HCT116 (cell line): ENCODE measurements at regions of chr9 and their contacts with region 1.

Region 1: GRCh38 chr9:347667-348292 is 133.1 kb downstream of the DOCK8 start:
- DNase-seq: peak; percentile 40
- ATAC-seq: peak; percentile 85
- H3K4me3 ChIP-seq: no peak overlapping the region
- H3K27ac ChIP-seq: no peak overlapping the region
- H3K4me1 ChIP-seq: no peaks in the 10 kb centered on the region
- H3K27me3 ChIP-seq: peaks cover 18% of the 10 kb centered on the region
- CTCF ChIP-seq: peak; percentile 75 to 92 (median 87)
- POLR2A ChIP-seq: no peak
- RAD21 ChIP-seq: peak; percentile 85

Region 2: GRCh38 chr9:763692-764524 is 416.1 kb after region 1 on chr9:
- CTCF ChIA-PET with region 1: interaction called, 8 read pairs
- POLR2A ChIA-PET with region 1: no interaction called
- RAD21 ChIA-PET with region 1: interaction called, 3 to 4 read pairs
- intact Hi-C with region 1: loop called (anchors 1 kb)
- DNase-seq: peak; percentile 90
- ATAC-seq: peak; percentile 100
- H3K4me3 ChIP-seq: no peak overlapping the region; a peak in 1 of 4 replicates
- H3K27ac ChIP-seq: no peak overlapping the region
- H3K4me1 ChIP-seq: peaks cover 3 to 6% of the 10 kb centered on the region in 2 experiments; a peak in 3 of 4 replicates
- H3K27me3 ChIP-seq: peaks cover 4% of the 10 kb centered on the region; the same call in 1 of the 2 replicates
- CTCF ChIP-seq: peak; percentile 81 to 96 (median 93)
- POLR2A ChIP-seq: no peak
- RAD21 ChIP-seq: peak; percentile 95

Region 3: DNA sequence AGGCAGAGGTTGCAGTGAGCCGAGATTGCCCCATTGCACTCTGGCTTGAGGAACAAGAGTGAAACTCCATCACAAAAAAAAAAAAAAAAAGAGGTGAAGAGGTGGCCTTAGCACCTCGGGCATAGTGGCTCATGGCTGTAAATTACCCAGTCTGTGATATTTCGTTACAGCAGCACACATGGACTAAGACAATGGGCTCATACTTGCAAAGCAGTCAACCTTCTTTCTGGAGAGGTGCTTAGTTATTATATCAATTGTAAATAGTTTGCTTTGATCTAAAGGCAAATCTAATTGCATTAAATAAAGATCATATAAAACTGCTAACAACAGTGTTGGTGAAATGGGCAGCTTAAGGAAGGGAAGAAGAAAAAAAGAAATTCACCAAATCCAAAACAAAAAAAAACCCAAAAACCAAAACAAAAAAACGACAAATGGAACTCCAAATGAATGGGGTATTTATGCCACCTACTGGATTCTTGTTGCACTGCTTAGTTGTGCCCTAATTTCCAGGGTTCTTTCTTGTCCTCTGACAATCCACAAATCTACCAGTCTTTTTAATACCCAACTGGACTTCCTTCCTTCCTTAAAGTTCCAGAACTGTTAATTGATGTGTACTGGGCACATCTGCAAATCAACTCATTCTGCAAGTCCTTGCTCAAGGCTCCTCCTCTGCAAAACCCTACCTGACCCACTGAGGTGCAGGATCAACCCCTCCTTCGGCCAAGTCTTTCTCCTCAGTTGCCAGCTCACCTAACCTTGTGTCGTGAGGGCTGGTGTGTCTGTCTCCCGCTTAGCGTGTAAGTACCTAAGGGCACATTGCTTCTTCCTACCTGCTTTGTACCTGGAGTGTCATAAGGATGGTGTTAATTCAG is 458.7 kb after region 1 on chr9:
- CTCF ChIA-PET with region 1: interaction called, 3 read pairs
- POLR2A ChIA-PET with region 1: no interaction called
- RAD21 ChIA-PET with region 1: no interaction called
- intact Hi-C with region 1: loop called (anchors 2 kb)
- DNase-seq: no peak
- ATAC-seq: peak; percentile 77
- H3K4me3 ChIP-seq: no peak overlapping the region
- H3K27ac ChIP-seq: no peak overlapping the region
- H3K4me1 ChIP-seq: peaks cover 0 to 6% of the 10 kb centered on the region in 2 experiments; a peak in 2 of 4 replicates
- H3K27me3 ChIP-seq: no peaks in the 10 kb centered on the region
- CTCF ChIP-seq: peak; percentile 56 to 77 (median 56); a peak in 5 of 6 replicates
- POLR2A ChIP-seq: no peak
- RAD21 ChIP-seq: peak; percentile 69

Region 4: GRCh38 chr9:893843-894420 is 546.2 kb after region 1 on chr9:
- CTCF ChIA-PET with region 1: interaction called, 3 read pairs
- POLR2A ChIA-PET with region 1: no interaction called
- RAD21 ChIA-PET with region 1: no interaction called
- intact Hi-C with region 1: loop called (anchors 5 kb)
- DNase-seq: peak; percentile 46
- ATAC-seq: peak; percentile 94
- H3K4me3 ChIP-seq: no peak overlapping the region
- H3K27ac ChIP-seq: no peak overlapping the region
- H3K4me1 ChIP-seq: peaks cover 2 to 11% of the 10 kb centered on the region in 2 experiments; a peak in 2 of 4 replicates
- H3K27me3 ChIP-seq: no peaks in the 10 kb centered on the region
- CTCF ChIP-seq: peak; percentile 75 to 96 (median 82)
- POLR2A ChIP-seq: no peak
- RAD21 ChIP-seq: peak; percentile 84